Common myeloid progenitor, CD34-positive (primary cell): ENCODE measurements at regions of chr6 and their contacts with region 1.

Region 1: DNA sequence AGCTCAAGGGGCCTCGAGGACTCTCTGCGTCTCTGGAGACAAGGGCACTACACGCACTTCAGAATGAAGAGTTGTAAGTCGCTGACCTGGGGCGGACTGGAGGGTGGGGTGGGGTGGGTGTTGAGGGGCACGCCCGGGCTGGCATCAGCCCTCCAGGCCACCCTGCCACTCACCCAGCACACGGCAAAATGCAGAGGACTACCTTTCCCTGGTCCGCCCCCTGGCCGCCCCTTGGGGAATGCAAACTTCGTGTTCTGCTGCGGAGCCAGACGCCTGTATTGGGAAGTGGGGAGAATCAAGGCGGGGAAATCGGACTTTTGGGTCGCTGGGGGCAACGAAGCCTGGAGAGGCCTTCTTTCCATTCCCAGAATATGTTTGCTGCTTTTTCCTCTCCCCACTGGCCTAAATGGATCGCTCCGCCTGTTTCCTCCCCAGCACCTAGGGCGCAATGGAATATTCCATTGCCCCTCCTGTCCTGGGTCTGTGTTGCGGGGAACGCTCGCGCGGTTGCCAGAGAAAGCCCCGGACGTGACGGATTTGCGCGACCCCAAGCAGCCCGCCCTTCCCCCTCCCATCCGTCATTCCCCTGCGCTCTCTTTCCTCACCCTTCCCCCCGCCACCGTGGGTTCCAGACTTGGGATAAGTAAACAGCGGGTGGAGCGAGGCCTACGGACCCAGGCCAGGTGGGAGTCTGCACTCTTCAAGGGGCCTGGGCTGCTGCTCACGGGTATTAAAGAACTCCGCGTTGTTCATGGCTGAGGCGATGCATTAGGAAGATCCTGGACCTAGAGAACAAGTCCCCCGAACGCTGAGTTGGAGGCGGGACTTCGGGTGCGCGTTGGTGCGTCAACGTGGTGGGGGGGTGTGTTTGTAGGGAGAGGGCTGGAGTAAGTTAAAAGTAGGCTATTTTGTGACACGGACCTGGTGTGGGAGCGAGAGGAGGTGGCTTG is at the start of gene PPT2:
- DNase-seq: peak; percentile 93 to 97 (median 97)
- H3K4me3 ChIP-seq: peak within 1 kb of the TSS; percentile 53 to 96 (median 85)
- H3K27ac ChIP-seq: peak within 1 kb of the TSS; percentile 86 to 88
- H3K4me1 ChIP-seq: peaks cover 0 to 51% (median 36%) of the 10 kb centered on the region in 4 experiments
- H3K27me3 ChIP-seq: peaks cover 0 to 21% (median 12%) of the 10 kb centered on the region in 5 experiments

Region 2: GRCh38 chr6:32118782-32119628 is 34.8 kb before region 1 on chr6:
- CTCF ChIA-PET with region 1: interaction called, 18 read pairs
- POLR2A ChIA-PET with region 1: interaction called, 3 read pairs
- DNase-seq: peak; percentile 76 to 85 (median 83)
- H3K4me3 ChIP-seq: no peak overlapping the region
- H3K27ac ChIP-seq: no peak overlapping the region
- H3K4me1 ChIP-seq: peaks cover 0 to 2% (median 0%) of the 10 kb centered on the region in 4 experiments
- H3K27me3 ChIP-seq: no peaks in the 10 kb centered on the region

Region 3: DNA sequence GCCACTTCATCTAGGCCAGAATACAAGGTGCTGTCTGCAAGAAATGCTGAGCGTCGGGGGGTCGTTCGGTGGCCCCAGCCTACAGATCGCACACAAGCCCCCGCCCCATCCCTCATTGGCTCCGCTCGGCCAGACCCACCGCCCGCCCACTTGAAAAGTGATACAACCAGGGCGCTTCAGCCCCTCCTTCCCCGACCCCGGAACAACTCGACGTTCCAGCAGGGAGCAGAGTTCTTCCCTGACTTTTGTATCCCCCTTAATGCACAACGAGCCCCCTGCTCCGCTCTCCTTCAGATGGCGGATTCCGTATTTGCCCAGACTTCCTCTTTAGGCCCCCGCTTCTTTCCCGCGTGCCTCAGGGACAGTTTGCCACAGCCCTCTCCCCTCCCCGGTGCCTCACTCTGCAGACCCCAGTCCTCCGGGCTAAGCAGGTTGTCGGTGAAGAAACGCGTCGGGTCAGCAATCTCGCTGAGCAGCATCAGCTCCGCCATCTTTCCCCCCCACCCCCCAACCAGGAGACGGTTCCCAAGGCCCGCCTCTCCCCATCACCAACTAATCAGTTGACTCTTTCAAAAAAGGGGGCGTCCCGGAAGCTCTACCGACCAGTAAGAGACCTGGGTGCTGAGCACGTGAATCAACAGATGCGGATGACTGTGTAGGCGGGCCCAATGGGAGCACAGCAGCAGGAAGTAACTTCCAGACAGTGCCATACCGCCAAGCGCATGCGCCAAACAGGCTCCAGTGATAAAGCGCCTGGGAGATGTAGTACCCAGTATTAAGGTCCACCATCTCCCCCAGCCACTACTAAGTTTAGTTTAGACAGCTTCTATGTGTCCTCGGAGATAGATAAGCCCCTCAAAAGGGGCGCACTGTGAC is 25.9 kb before region 1 on chr6 and contains the start of gene ATF6B:
- CTCF ChIA-PET with region 1: interaction called, 13 read pairs
- POLR2A ChIA-PET with region 1: no interaction called
- DNase-seq: peak; percentile 100
- H3K4me3 ChIP-seq: peak within 1 kb of the TSS; percentile 92 to 99 (median 97)
- H3K27ac ChIP-seq: peak within 1 kb of the TSS; percentile 87 to 96
- H3K4me1 ChIP-seq: peaks cover 1 to 30% (median 26%) of the 10 kb centered on the region in 4 experiments
- H3K27me3 ChIP-seq: no peaks in the 10 kb centered on the region

Region 4: GRCh38 chr6:32166411-32167061 is 12.7 kb after region 1 on chr6:
- CTCF ChIA-PET with region 1: interaction called, 11 read pairs
- POLR2A ChIA-PET with region 1: no interaction called
- DNase-seq: no peak
- H3K4me3 ChIP-seq: no peak overlapping the region
- H3K27ac ChIP-seq: no peak overlapping the region
- H3K4me1 ChIP-seq: no peaks in the 10 kb centered on the region
- H3K27me3 ChIP-seq: no peaks in the 10 kb centered on the region

Region 5: GRCh38 chr6:32203426-32204247 is 49.8 kb after region 1 on chr6:
- CTCF ChIA-PET with region 1: no interaction called
- POLR2A ChIA-PET with region 1: no interaction called
- DNase-seq: no peak
- H3K4me3 ChIP-seq: no peak overlapping the region
- H3K27ac ChIP-seq: no peak overlapping the region
- H3K4me1 ChIP-seq: no peaks in the 10 kb centered on the region
- H3K27me3 ChIP-seq: no peaks in the 10 kb centered on the region